ENCODE measurements at regions of chr17 and their contacts with region 1.

Region 1: DNA sequence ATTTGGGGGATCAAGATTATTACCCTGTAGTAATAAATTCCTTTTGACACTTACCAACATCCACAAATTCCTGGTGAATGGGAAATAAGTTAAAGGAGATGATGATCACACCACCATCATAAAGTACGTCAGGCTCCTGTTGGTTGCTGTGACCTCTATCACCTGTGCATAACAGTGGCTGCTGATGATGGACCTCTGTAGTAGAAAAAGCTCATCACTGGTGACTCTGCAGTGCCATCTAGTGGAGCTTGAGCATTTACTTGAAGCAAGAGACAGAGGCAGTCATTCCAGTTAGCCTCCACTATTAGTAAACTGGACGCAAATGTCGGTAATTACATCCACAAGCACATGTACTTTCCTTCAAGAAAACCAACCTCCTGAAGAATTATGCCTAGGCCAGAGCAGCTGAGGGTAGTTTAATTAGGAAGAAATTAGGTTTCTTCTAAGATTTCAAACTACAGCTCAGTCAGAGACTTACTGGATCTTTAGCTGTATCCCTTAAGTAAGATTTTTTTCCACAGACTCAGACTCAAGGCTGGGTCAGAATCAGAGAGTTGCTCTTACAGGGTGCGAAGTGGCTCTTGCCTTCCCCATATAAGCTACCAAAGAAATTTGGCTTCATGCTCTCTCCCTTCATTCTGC is 39.3 kb downstream of the CYB561 start:
- DNase-seq: peak; percentile 87
- H3K4me3 ChIP-seq: no peak overlapping the region
- H3K27ac ChIP-seq: no peak overlapping the region
- H3K4me1 ChIP-seq: peaks cover 4% of the 10 kb centered on the region
- H3K27me3 ChIP-seq: no peaks in the 10 kb centered on the region
- CTCF ChIP-seq: peak; percentile 74 to 77
- POLR2A ChIP-seq: no peak

Region 2: DNA sequence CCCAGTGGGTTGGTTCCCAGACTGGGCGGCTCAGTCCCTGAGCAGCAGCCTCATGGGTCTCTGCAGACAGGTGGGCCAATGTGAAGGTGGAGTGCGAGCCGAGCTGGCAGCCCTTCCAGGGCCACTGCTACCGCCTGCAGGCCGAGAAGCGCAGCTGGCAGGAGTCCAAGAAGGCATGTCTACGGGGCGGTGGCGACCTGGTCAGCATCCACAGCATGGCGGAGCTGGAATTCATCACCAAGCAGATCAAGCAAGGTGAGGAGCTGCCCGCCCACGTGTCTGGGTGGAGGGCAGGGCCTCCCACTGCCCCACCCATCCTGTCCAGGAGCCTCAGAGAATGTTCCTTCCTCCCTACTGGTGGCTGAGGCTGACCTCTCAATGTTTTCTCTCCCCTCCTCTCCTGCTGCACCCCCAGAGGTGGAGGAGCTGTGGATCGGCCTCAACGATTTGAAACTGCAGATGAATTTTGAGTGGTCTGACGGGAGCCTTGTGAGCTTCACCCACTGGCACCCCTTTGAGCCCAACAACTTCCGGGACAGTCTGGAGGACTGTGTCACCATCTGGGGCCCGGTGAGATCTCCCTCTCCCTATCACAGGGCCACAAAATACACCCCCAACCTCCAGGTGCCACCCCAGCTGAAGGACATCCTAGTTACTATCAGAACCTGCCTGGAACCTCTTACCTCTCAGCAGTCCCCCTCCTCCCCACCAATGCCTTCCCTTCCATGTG is 735.1 kb before region 1 on chr17:
- CTCF ChIA-PET with region 1: interaction called, 69 read pairs
- POLR2A ChIA-PET with region 1: no interaction called
- dilution Hi-C with region 1: no loop called
- intact Hi-C with region 1: loop called (anchors 1 kb)
- DNase-seq: no peak
- H3K4me3 ChIP-seq: no peak overlapping the region
- H3K27ac ChIP-seq: no peak overlapping the region
- H3K4me1 ChIP-seq: no peaks in the 10 kb centered on the region
- H3K27me3 ChIP-seq: no peaks in the 10 kb centered on the region
- CTCF ChIP-seq: no peak
- POLR2A ChIP-seq: no peak

Region 3: GRCh38 chr17:62968445-62968923 is 438.3 kb before region 1 on chr17:
- CTCF ChIA-PET with region 1: interaction called, 5 read pairs
- POLR2A ChIA-PET with region 1: no interaction called
- dilution Hi-C with region 1: no loop called
- intact Hi-C with region 1: loop called (anchors 2 kb)
- DNase-seq: peak; percentile 90
- H3K4me3 ChIP-seq: no peak overlapping the region
- H3K27ac ChIP-seq: no peak overlapping the region
- H3K4me1 ChIP-seq: peaks cover 19% of the 10 kb centered on the region
- H3K27me3 ChIP-seq: no peaks in the 10 kb centered on the region
- CTCF ChIP-seq: peak; percentile 78 to 80
- POLR2A ChIP-seq: no peak

Region 4: DNA sequence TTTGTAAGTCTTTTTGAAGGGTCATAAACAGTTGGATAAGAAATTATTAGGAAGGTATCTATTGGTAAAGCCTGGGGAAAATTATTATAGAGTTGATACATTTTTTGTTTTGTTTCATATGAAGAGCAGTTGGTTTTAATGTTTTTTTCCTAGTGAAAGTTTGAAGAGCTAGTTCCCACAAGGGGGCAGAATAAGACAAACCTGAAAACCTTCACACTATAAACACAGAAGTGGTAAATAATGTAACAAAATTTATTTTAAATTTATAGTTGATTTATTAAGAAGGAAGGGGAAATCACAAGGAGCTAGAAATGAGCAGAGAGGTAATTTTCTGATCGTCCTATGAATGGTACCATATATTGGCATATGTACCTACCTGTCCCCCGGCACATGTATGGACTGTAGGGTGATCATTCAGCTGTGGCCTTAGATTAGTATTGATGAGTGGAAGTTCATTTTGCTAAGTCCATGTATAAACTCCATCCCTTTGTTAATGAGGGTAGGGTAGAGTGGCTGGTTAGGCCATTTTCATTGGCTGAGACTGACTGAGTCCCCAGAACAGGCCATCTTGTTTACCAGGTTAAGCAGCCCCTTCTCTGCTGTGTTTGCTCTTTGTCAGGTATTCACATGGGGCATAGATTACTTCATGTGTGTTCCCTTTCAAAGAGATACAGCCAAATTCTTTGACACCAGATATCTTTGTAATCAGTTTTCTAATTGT is 324.4 kb before region 1 on chr17:
- CTCF ChIA-PET with region 1: interaction called, 295 read pairs
- POLR2A ChIA-PET with region 1: no interaction called
- dilution Hi-C with region 1: no loop called
- intact Hi-C with region 1: loop called (anchors 1 kb)
- DNase-seq: peak; percentile 58
- H3K4me3 ChIP-seq: no peak overlapping the region
- H3K27ac ChIP-seq: no peak overlapping the region
- H3K4me1 ChIP-seq: no peaks in the 10 kb centered on the region
- H3K27me3 ChIP-seq: no peaks in the 10 kb centered on the region
- CTCF ChIP-seq: peak; percentile 9 to 30
- POLR2A ChIP-seq: no peak

Region 5: GRCh38 chr17:63345611-63346010 is 61.2 kb before region 1 on chr17:
- CTCF ChIA-PET with region 1: interaction called, 10 read pairs
- POLR2A ChIA-PET with region 1: no interaction called
- dilution Hi-C with region 1: no loop called
- intact Hi-C with region 1: no loop called
- DNase-seq: no peak
- H3K4me3 ChIP-seq: no peak overlapping the region
- H3K27ac ChIP-seq: no peak overlapping the region
- H3K4me1 ChIP-seq: no peaks in the 10 kb centered on the region
- H3K27me3 ChIP-seq: no peaks in the 10 kb centered on the region
- CTCF ChIP-seq: no peak
- POLR2A ChIP-seq: no peak

Region 6: GRCh38 chr17:63395075-63395805 is 11.6 kb before region 1 on chr17:
- CTCF ChIA-PET with region 1: interaction called, 12 read pairs
- POLR2A ChIA-PET with region 1: no interaction called
- dilution Hi-C with region 1: no loop called
- intact Hi-C with region 1: no loop called
- DNase-seq: no peak
- H3K4me3 ChIP-seq: no peak overlapping the region
- H3K27ac ChIP-seq: no peak overlapping the region
- H3K4me1 ChIP-seq: peaks cover 17% of the 10 kb centered on the region
- H3K27me3 ChIP-seq: no peaks in the 10 kb centered on the region
- CTCF ChIP-seq: no peak
- POLR2A ChIP-seq: no peak

Region 7: GRCh38 chr17:63478791-63479494 is 72.1 kb after region 1 on chr17:
- CTCF ChIA-PET with region 1: interaction called, 20 read pairs
- POLR2A ChIA-PET with region 1: no interaction called
- dilution Hi-C with region 1: no loop called
- intact Hi-C with region 1: no loop called
- DNase-seq: peak; percentile 81
- H3K4me3 ChIP-seq: peak overlapping the region in 1 of 3 experiments; percentile 62
- H3K27ac ChIP-seq: no peak overlapping the region
- H3K4me1 ChIP-seq: peaks cover 27% of the 10 kb centered on the region
- H3K27me3 ChIP-seq: no peaks in the 10 kb centered on the region
- CTCF ChIP-seq: peak; percentile 87 to 96
- POLR2A ChIP-seq: no peak

Measured in endothelial cell of umbilical vein (primary cell).